Naive thymus-derived CD4-positive, alpha-beta T cell (primary cell): ENCODE measurements at regions of chr5 and their contacts with region 1.

Region 1: DNA sequence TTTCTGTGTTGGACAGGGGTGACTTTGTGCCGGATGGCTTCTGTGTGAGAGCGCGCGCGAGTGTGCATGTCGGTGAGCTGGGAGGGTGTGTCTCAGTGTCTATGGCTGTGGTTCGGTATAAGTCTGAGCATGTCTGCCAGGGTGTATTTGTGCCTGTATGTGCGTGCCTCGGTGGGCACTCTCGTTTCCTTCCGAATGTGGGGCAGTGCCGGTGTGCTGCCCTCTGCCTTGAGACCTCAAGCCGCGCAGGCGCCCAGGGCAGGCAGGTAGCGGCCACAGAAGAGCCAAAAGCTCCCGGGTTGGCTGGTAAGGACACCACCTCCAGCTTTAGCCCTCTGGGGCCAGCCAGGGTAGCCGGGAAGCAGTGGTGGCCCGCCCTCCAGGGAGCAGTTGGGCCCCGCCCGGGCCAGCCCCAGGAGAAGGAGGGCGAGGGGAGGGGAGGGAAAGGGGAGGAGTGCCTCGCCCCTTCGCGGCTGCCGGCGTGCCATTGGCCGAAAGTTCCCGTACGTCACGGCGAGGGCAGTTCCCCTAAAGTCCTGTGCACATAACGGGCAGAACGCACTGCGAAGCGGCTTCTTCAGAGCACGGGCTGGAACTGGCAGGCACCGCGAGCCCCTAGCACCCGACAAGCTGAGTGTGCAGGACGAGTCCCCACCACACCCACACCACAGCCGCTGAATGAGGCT is at the start of gene ADRB2:
- DNase-seq: peak; percentile 74 to 83 (median 79)
- ATAC-seq: peak; percentile 94
- H3K4me3 ChIP-seq: peak within 1 kb of the TSS; percentile 75
- H3K4me3 Mint-ChIP-seq: peak within 1 kb of the TSS; percentile 83 to 94 (median 89)
- H3K27ac ChIP-seq: peak within 1 kb of the TSS; percentile 54
- H3K27ac Mint-ChIP-seq: peak within 1 kb of the TSS; percentile 16 to 82 (median 70)
- H3K4me1 ChIP-seq: peaks cover 7 to 18% of the 10 kb centered on the region in 2 donors
- H3K4me1 Mint-ChIP-seq: peaks cover 20 to 43% (median 31%) of the 10 kb centered on the region in 7 donors
- H3K27me3 ChIP-seq: no peaks in the 10 kb centered on the region
- H3K27me3 Mint-ChIP-seq: peaks cover 0 to 76% (median 5%) of the 10 kb centered on the region in 5 donors
- total RNA-seq, gene ADRB2: 0.36 to 14.4 (median 1.3) TPM

Region 2: GRCh38 chr5:148805326-148806290 is 20.6 kb before region 1 on chr5:
- CTCF ChIA-PET with region 1: interaction called, 3 read pairs
- POLR2A ChIA-PET with region 1: interaction called, 4 read pairs
- intact Hi-C with region 1: loop called (anchors 1 kb)
- DNase-seq: peak in 1 of 9 donors; percentile 39
- ATAC-seq: peak; percentile 4
- H3K4me3 ChIP-seq: no peak overlapping the region
- H3K4me3 Mint-ChIP-seq: no peak overlapping the region
- H3K27ac ChIP-seq: no peak overlapping the region
- H3K27ac Mint-ChIP-seq: peak overlapping the region in 4 of 9 donors; percentile 13 to 65 (median 28)
- H3K4me1 ChIP-seq: peaks cover 10 to 12% of the 10 kb centered on the region in 2 donors
- H3K4me1 Mint-ChIP-seq: peaks cover 20 to 35% (median 26%) of the 10 kb centered on the region in 7 donors
- H3K27me3 ChIP-seq: no peaks in the 10 kb centered on the region
- H3K27me3 Mint-ChIP-seq: peaks cover 0 to 5% (median 0%) of the 10 kb centered on the region in 5 donors